ENCODE measurements at regions of chr7 and their contacts with region 1.

Region 1: DNA sequence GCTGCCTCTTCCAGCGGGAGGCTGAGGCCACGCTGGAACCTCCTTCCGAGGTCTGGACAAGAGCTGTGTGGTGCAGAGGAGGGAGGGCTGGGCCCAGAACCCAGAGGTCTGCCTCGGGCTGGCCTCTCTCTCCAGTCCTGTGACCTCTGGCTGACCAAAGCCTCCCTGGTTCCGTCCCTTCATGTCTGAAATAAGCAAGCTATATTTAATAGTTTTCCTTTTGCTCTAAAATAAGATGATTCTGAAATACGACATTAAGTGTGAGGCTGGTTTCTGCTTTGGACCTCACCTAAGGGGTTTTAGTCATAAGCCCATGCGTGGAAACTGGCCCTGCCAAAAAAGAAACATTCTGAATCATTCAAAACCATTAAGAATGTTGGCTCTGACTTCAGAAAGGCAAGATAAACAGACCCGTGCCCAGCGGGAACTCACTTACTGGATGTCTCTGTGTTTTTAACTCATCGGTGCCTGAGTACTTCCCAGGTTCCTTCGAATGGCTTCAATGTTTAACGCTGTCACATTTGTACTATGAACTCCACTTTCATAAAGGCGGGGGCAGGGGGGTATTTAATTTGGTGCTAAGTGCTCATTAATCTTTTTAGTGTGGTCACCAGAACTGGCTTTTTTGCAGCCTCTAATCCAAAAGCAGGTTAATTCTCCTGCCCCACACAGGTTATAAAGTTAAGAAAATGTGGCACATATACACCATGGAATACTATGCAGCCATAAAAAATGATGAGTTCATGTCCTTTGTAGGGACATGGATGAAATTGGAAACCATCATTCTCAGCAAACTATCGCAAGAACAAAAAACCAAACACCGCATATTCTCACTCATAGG is 157.5 kb upstream of the KLF14 start:
- DNase-seq: peak; percentile 97
- H3K4me3 Mint-ChIP-seq: peak overlapping the region; percentile 69
- H3K27ac Mint-ChIP-seq: peak overlapping the region; percentile 95
- H3K4me1 Mint-ChIP-seq: peaks cover 78% of the 10 kb centered on the region
- H3K27me3 Mint-ChIP-seq: no peaks in the 10 kb centered on the region
- CTCF ChIP-seq: no peak

Region 2: GRCh38 chr7:130463553-130464434 is 427.7 kb before region 1 on chr7:
- CTCF ChIA-PET with region 1: no interaction called
- POLR2A ChIA-PET with region 1: no interaction called
- intact Hi-C with region 1: no loop called
- DNase-seq: no peak
- H3K4me3 Mint-ChIP-seq: no peak overlapping the region
- H3K27ac Mint-ChIP-seq: no peak overlapping the region
- H3K4me1 Mint-ChIP-seq: no peaks in the 10 kb centered on the region
- H3K27me3 Mint-ChIP-seq: no peaks in the 10 kb centered on the region
- CTCF ChIP-seq: no peak

Region 3: DNA sequence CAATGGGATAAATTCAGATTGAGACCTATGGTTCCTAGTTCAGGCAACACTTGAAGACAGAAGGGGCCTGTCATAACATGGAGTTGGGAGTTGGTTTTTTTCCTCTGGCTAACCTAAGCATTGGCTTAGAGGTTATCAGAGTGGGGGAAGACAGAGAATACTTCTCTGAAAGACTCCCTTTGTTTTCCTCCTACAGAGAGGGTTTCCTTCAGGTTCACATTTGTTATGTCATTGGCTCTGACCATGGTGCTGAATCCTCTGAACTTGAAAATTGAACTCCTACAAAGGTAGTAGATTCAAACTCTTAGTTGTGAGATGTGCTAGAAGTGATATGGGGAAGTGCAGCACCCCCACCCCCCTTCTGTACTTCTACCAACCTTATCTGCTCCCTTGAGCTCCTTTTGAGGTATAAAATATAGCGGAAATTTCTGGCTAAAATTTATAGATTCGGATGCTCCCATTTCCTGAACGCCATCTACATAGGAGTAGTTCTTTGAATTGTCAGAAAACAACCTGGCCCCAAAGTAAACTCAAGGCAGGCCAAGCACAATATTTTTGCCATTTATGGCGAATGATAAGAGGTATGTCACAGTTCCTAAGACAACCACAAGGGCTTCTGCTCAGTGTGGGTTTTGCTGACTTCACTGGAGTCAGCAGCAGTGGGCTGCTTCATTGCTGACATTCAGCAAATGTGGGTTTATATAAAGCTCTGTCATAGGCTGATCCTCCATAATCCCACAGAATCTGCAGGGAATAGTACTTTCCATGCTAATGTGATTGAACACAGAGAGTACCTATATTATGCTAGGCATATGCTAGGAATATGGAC is 25.9 kb before region 1 on chr7:
- CTCF ChIA-PET with region 1: interaction called, 9 read pairs
- POLR2A ChIA-PET with region 1: interaction called, 10 read pairs
- intact Hi-C with region 1: no loop called
- DNase-seq: peak; percentile 38
- H3K4me3 Mint-ChIP-seq: no peak overlapping the region
- H3K27ac Mint-ChIP-seq: peak overlapping the region; percentile 85
- H3K4me1 Mint-ChIP-seq: peaks cover 13% of the 10 kb centered on the region
- H3K27me3 Mint-ChIP-seq: no peaks in the 10 kb centered on the region
- CTCF ChIP-seq: no peak

Region 4: DNA sequence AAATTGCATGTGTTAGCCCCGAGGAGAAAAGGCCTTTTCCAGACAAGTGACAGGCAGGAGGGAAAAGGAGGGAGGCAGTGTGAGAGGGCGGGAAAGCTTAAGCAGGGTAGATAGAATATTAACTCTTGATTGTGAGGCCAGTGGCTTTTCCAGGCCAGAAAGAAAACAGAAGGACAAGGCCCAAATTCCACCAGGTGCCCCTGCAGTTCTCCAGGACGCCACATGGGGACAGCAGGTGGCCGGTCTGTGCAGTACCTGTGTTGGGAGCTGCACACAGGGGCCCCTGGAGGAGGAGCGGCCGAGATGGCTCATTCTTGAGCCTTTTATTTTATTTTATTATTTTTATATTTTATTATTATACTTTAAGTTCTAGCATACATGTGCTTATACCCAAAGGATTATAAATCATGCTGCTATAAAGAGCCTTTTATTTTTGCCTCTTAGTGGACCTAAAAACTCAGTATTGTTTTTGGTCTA is 16.2 kb before region 1 on chr7:
- CTCF ChIA-PET with region 1: interaction called, 89 read pairs
- POLR2A ChIA-PET with region 1: interaction called, 75 read pairs
- intact Hi-C with region 1: no loop called
- DNase-seq: peak; percentile 69
- H3K4me3 Mint-ChIP-seq: no peak overlapping the region
- H3K27ac Mint-ChIP-seq: peak overlapping the region; percentile 89
- H3K4me1 Mint-ChIP-seq: peaks cover 41% of the 10 kb centered on the region
- H3K27me3 Mint-ChIP-seq: no peaks in the 10 kb centered on the region
- CTCF ChIP-seq: peak; percentile 92

Region 5: GRCh38 chr7:130881091-130881798 is 10.2 kb before region 1 on chr7:
- CTCF ChIA-PET with region 1: interaction called, 89 read pairs
- POLR2A ChIA-PET with region 1: interaction called, 75 read pairs
- intact Hi-C with region 1: no loop called
- DNase-seq: no peak
- H3K4me3 Mint-ChIP-seq: no peak overlapping the region
- H3K27ac Mint-ChIP-seq: peak overlapping the region; percentile 67
- H3K4me1 Mint-ChIP-seq: peaks cover 51% of the 10 kb centered on the region
- H3K27me3 Mint-ChIP-seq: no peaks in the 10 kb centered on the region
- CTCF ChIP-seq: no peak

Region 6: GRCh38 chr7:130941322-130942210 is 50.1 kb after region 1 on chr7:
- CTCF ChIA-PET with region 1: interaction called, 123 read pairs
- POLR2A ChIA-PET with region 1: interaction called, 74 read pairs
- intact Hi-C with region 1: loop called (anchors 2 kb)
- DNase-seq: peak; percentile 41
- H3K4me3 Mint-ChIP-seq: peak overlapping the region; percentile 76
- H3K27ac Mint-ChIP-seq: peak overlapping the region; percentile 90
- H3K4me1 Mint-ChIP-seq: peaks cover 70% of the 10 kb centered on the region
- H3K27me3 Mint-ChIP-seq: no peaks in the 10 kb centered on the region
- CTCF ChIP-seq: no peak

Region 7: GRCh38 chr7:131196803-131197202 is 305.3 kb after region 1 on chr7:
- CTCF ChIA-PET with region 1: no interaction called
- POLR2A ChIA-PET with region 1: no interaction called
- intact Hi-C with region 1: no loop called
- DNase-seq: no peak
- H3K4me3 Mint-ChIP-seq: no peak overlapping the region
- H3K27ac Mint-ChIP-seq: no peak overlapping the region
- H3K4me1 Mint-ChIP-seq: peaks cover 15% of the 10 kb centered on the region
- H3K27me3 Mint-ChIP-seq: no peaks in the 10 kb centered on the region
- CTCF ChIP-seq: no peak